Activated T-helper 1 cell treated with anti-CD3 and anti-CD28 coated beads, Interleukin-12 subunit alpha, Interleukin-12 subunit beta, Interleukin-2, Interleukin-4 antibody, amounts not matched to agents 30 ng/mL and 10 ng/mL and 1 ng/mL, durations not matched to agents 14 hours and 24 hours and 36 hours (primary cell): ENCODE measurements at regions of chr10 and their contacts with region 1.

Region 1: GRCh38 chr10:93554760-93555432 is 11.6 kb upstream of the FFAR4 start:
- DNase-seq: peak; percentile 8
- H3K4me3 Mint-ChIP-seq: no peak overlapping the region
- H3K27ac Mint-ChIP-seq: no peak overlapping the region
- H3K4me1 Mint-ChIP-seq: no peaks in the 10 kb centered on the region
- H3K27me3 Mint-ChIP-seq: peaks cover 7% of the 10 kb centered on the region

Region 2: GRCh38 chr10:93288654-93289634 is 266.0 kb before region 1 on chr10:
- intact Hi-C with region 1: no loop called
- DNase-seq: peak; percentile 17
- H3K4me3 Mint-ChIP-seq: no peak overlapping the region
- H3K27ac Mint-ChIP-seq: no peak overlapping the region
- H3K4me1 Mint-ChIP-seq: no peaks in the 10 kb centered on the region
- H3K27me3 Mint-ChIP-seq: peaks cover 6% of the 10 kb centered on the region

Region 3: GRCh38 chr10:93680412-93681047 is 125.6 kb after region 1 on chr10:
- intact Hi-C with region 1: loop called (anchors 1 kb)
- DNase-seq: no peak
- H3K4me3 Mint-ChIP-seq: no peak overlapping the region
- H3K27ac Mint-ChIP-seq: no peak overlapping the region
- H3K4me1 Mint-ChIP-seq: no peaks in the 10 kb centered on the region
- H3K27me3 Mint-ChIP-seq: no peaks in the 10 kb centered on the region

Region 4: GRCh38 chr10:93816123-93816747 is 261.3 kb after region 1 on chr10:
- intact Hi-C with region 1: loop called (anchors 2 kb)
- DNase-seq: no peak
- H3K4me3 Mint-ChIP-seq: no peak overlapping the region
- H3K27ac Mint-ChIP-seq: no peak overlapping the region
- H3K4me1 Mint-ChIP-seq: no peaks in the 10 kb centered on the region
- H3K27me3 Mint-ChIP-seq: peaks cover 13% of the 10 kb centered on the region

Region 5: DNA sequence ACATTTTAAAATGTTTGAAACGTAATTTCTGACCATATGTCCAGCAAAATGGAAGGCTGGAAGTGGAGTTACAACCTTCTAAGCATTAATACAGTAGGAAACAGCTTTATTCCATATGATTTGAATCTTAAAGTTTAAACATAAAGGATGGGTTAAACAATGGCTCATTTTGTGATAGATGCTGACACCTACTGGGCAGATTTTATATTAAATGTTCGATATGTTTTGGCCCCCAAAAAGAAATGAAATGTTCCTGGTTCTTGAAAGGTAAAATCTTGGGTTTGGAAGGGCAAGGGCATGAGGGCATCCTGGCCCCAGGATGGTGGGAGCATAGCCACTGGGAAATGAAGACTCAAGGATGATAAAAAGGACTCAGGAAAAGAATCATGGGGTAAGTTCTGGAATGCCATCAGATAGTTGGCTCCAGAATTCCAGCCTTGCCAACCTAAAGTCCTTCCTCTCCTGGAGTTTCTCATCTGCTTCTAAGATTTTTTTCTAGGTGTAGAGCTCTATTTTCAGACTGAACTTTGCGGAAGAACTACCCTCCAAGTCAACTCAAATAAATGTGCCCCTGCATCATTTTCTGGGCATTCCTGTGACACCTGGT is 304.3 kb after region 1 on chr10:
- intact Hi-C with region 1: loop called (anchors 2 kb)
- DNase-seq: no peak
- H3K4me3 Mint-ChIP-seq: no peak overlapping the region
- H3K27ac Mint-ChIP-seq: no peak overlapping the region
- H3K4me1 Mint-ChIP-seq: no peaks in the 10 kb centered on the region
- H3K27me3 Mint-ChIP-seq: peaks cover 7% of the 10 kb centered on the region